ENCODE measurements at regions of chr7 and their contacts with region 1.

Region 1: GRCh38 chr7:129218514-129219062 is 6.2 kb upstream of the AHCYL2 start:
- DNase-seq: no peak
- H3K4me3 ChIP-seq: no peak overlapping the region
- H3K27me3 ChIP-seq: no peaks in the 10 kb centered on the region
- CTCF ChIP-seq: peak; percentile 85

Region 2: DNA sequence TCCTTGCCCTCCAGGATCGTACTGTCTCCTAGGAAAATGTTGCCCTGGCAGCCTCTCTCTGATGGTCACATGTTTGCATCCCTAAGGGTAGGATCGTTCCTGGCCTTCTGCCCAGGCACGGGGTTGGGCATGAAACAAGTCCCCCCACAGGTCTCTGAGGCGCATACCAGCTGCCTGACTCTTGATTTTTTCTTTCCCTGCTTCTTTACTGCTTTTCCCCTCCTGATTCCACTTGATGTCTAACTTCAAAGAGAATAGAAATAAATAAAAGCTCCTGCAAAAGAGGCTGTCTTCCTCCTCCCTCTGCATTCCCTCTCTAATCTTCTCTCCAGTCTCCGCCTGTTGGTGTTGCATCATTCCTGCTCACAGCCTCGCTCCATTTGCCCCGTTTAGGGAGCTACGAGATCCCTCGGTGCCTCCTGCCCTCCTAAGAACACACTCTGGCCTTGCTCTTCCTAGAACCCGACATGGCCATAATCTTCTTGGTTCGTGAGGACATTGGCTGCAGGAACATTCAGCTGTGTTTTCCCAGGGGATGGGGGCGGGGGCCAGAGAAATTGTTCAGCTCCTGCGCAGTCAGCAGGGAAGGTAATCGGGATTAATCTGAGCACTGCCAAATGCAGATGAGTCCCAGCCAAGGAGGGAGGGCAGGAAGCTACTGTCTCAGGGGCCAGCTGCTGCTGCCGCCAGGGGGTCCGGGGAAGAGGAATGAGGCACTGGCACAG is 951.5 kb before region 1 on chr7:
- CTCF ChIA-PET with region 1: no interaction called
- POLR2A ChIA-PET with region 1: no interaction called
- DNase-seq: peak; percentile 17
- H3K4me3 ChIP-seq: peak overlapping the region; percentile 14; the same call in 1 of the 2 replicates
- H3K27me3 ChIP-seq: peaks cover 16% of the 10 kb centered on the region
- CTCF ChIP-seq: peak; percentile 34; the same call in 1 of the 2 replicates

Region 3: DNA sequence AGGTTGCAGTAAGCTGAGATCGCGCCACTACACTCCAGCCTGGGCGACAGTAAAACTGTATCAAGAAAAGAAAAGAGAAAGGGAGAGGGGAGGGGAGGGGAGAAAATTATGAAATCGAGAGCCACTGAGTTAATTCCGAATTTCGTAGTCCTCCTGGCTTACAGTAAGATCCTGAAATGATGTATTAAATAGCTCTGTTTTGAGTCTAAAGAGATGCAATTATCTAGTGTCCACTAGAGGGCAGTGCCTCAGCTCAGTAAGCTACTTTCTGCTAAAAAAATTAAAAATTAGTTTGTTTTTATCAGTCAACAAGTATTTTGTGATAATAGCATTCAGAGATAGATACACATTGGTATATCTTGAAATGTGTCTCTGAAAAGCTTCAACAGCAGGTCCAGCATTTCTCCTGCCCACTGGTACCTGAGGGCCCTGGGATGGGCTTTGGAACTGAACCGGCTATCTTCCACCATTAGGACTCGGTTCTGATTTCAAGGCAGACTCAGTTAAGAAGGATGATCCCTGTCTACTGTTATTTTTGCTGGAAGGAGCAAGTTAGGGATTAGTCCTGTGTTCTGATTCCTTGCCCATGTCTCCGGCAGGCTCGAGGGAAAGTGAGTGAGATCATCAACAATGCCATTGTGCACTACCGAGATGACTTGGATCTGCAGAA is 54.6 kb before region 1 on chr7:
- CTCF ChIA-PET with region 1: interaction called, 186 read pairs
- POLR2A ChIA-PET with region 1: no interaction called
- DNase-seq: peak; percentile 19
- H3K4me3 ChIP-seq: no peak overlapping the region
- H3K27me3 ChIP-seq: peaks cover 16% of the 10 kb centered on the region
- CTCF ChIP-seq: peak; percentile 83

Region 4: GRCh38 chr7:129262324-129262723 is 43.7 kb after region 1 on chr7:
- CTCF ChIA-PET with region 1: interaction called, 29 read pairs
- POLR2A ChIA-PET with region 1: no interaction called
- DNase-seq: no peak
- H3K4me3 ChIP-seq: no peak overlapping the region
- H3K27me3 ChIP-seq: no peaks in the 10 kb centered on the region
- CTCF ChIP-seq: no peak

Region 5: DNA sequence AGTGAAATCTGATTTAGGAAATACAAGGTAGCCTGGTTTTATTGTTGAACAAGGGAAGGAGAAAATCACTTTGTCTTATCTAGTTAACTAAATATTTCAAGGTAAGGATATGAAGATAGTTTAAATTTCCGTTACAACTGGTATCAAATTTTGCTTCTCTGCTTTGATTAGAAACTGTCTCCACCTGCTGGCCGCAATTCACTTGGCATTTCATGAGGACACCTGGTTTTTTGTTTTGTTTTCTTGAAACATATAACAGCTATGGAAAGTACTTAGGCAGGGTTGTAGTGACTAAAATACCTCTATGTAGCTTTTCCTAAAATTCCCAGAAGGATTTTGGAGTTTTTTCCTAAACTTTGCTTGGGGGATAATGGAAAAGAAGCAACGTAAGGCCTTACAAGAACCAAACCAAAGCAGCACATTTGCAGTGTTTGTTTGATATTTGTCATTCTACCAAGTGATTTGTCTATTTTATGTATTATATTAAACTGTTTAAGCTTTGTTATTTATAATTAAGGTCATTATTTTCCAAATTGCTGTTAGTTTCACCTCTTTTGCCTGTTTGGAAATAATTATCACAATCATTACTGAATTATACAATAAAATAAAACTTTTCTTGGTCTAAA is 79.8 kb after region 1 on chr7:
- CTCF ChIA-PET with region 1: interaction called, 112 read pairs
- POLR2A ChIA-PET with region 1: no interaction called
- DNase-seq: peak; percentile 3
- H3K4me3 ChIP-seq: no peak overlapping the region
- H3K27me3 ChIP-seq: no peaks in the 10 kb centered on the region
- CTCF ChIP-seq: peak; percentile 73

Region 6: DNA sequence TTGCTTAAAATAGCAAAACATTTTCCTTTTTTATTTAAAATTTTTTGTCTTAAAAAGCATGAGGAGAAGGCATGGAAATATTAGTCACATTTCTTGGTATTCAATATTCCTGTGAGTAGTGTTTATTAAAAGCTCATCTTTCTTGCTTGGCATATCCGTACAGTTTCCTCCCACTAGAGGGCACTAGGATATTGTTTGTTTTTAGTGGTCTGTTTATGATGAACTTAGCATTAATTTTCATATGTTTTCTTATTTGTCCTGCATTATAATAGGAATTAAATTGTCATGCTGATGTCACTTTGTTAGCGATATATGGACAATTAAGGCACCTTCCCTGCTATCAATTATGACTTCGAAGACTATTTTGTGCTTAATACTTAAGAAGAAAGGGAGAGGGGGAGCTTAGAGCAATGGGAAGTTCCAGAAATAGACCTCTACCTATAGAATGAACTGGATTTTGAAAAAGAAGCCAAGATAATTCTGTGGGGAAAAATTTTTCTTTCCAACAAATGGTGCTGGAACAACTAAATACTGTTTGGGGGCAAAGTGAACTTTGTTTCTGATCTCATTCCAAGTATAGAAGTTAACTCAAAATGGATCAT is 124.6 kb after region 1 on chr7:
- CTCF ChIA-PET with region 1: interaction called, 19 read pairs
- POLR2A ChIA-PET with region 1: no interaction called
- DNase-seq: no peak
- H3K4me3 ChIP-seq: no peak overlapping the region
- H3K27me3 ChIP-seq: no peaks in the 10 kb centered on the region
- CTCF ChIP-seq: peak; percentile 71

Region 7: DNA sequence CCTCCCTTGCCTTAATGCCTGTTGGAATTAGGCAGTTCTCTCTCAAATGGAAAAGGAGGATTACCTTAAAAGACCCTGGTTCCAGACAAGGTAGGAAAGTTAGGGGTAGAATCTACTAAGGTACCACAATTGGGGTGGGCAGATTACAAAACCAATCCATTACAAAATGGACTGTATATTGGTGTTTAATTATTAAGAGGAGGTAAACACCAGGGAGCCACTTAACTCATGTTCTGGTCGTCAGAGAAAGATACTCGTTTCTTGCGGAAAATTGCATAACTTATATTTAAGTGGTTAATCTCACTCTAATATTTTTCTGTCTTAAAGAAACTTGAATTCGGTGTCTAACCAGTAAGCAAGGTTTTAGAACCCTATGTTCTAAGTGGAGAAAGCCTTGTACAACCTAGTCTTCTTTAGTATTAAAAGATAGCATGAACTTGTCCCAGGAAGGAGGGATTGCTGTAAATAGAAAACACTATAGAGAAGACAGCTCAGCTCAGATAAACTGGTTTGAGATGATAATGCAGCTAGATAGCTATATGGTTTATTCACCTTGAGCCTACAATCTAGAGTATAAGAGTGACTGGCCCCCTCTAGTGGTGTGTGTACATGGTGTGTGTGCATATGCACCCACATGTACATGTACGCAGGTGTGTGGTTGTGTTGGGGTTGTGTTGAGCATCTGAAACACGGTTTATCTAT is 157.6 kb after region 1 on chr7:
- CTCF ChIA-PET with region 1: interaction called, 10 read pairs
- POLR2A ChIA-PET with region 1: no interaction called
- DNase-seq: no peak
- H3K4me3 ChIP-seq: no peak overlapping the region
- H3K27me3 ChIP-seq: no peaks in the 10 kb centered on the region
- CTCF ChIP-seq: peak; percentile 59